ENCODE measurements at regions of chr12 and their contacts with region 1.

Region 1: GRCh38 chr12:26832822-26833742 is at the start of gene ITPR2:
- H3K4me3 ChIP-seq: peak within 1 kb of the TSS; percentile 78
- H3K27ac ChIP-seq: peak within 1 kb of the TSS; percentile 70
- H3K4me1 ChIP-seq: peaks cover 7% of the 10 kb centered on the region
- CTCF ChIP-seq: no peak

Region 2: DNA sequence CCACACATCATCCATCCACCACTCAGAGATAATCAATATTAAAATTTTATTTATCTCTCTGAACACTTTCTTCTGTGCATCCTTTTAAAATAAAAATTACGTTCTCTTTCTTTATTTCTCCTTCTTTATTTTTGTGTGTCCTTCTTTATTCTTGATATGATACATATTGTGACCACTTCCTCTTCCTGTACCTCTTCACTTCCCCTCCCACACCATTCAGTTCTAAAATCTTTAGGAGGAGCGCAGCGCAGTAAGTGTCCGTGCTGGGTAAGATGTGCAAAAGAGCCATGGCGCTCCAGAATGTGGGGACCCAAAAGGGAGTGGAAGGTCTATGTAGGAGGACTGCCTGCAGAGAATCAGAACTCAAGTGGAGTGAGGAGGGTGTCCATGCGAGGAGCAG is 256.8 kb before region 1 on chr12:
- CTCF ChIA-PET with region 1: no interaction called
- POLR2A ChIA-PET with region 1: no interaction called
- H3K4me3 ChIP-seq: no peak overlapping the region
- H3K27ac ChIP-seq: no peak overlapping the region
- H3K4me1 ChIP-seq: peaks cover 4% of the 10 kb centered on the region
- CTCF ChIP-seq: no peak

Region 3: DNA sequence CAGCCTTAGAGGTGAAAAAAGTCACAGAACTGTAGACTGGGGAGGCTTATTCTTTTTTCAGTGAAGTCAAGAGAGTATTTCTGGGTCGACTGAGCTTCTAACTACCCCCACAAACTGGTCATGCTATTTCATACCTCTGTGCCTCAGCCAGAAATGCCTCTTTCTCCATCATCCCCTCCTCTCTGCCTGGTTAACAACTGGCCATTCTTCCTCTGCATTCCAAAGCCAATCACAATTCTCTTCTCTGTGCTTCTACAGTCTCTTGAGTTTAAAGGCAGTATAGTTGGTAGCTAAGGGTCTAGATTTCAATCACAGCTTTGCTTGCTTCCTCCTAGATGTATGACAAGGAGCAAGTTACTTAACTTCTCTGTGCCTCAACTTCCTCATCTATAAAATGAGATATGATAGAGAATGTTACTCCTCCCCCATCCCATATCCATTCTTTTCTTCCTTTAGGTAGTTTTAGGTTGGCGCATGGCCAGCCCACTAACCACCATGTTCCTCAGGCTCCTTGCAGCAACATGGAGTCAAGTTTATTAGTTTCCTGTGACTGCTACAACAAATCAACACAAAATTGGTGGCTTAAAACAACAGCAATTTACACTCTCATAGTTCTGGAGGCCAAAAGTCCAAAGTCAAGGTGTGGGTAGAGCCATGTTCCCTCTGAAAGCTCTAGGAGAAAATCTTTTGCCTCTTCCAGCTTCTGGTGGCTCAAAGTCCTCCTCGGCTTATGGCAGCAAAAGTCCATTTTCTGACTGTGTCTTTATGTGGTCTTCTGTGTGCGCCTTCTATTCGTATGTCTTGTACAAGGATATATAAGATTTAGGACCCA is 62.6 kb before region 1 on chr12:
- CTCF ChIA-PET with region 1: no interaction called
- POLR2A ChIA-PET with region 1: no interaction called
- H3K4me3 ChIP-seq: no peak overlapping the region
- H3K27ac ChIP-seq: no peak overlapping the region
- H3K4me1 ChIP-seq: peaks cover 4% of the 10 kb centered on the region
- CTCF ChIP-seq: no peak

Region 4: GRCh38 chr12:26783131-26783526 is 50.0 kb before region 1 on chr12:
- CTCF ChIA-PET with region 1: no interaction called
- POLR2A ChIA-PET with region 1: no interaction called
- H3K4me3 ChIP-seq: no peak overlapping the region
- H3K27ac ChIP-seq: no peak overlapping the region
- H3K4me1 ChIP-seq: peaks cover 8% of the 10 kb centered on the region
- CTCF ChIP-seq: no peak

Region 5: DNA sequence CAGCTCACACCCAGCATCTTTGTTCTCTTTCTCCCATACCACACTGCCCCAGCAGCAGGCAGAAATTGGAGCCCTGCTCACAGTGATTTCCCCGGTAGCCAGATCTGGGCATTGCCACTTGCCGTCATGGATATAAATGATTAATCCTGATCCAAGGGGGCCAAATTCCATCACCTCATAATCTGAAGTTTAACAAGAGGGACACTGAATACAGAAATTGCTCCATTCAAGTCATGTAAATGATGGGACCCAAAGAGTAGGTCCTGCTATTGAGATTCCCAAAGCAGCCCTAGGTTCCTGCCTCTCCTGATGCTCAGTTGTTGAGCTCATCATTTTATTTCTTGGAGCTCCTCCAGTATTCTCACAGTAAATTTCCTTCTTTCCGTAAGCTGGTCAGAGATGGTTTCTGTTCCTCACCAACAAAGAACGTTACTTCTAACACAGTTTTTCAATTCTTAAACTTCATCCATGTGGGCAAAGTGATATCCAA is 11.8 kb before region 1 on chr12:
- CTCF ChIA-PET with region 1: interaction called, 5 read pairs
- POLR2A ChIA-PET with region 1: interaction called, 16 read pairs
- H3K4me3 ChIP-seq: no peak overlapping the region
- H3K27ac ChIP-seq: no peak overlapping the region
- H3K4me1 ChIP-seq: peaks cover 3% of the 10 kb centered on the region; the same call in 1 of the 2 replicates
- CTCF ChIP-seq: no peak

Region 6: DNA sequence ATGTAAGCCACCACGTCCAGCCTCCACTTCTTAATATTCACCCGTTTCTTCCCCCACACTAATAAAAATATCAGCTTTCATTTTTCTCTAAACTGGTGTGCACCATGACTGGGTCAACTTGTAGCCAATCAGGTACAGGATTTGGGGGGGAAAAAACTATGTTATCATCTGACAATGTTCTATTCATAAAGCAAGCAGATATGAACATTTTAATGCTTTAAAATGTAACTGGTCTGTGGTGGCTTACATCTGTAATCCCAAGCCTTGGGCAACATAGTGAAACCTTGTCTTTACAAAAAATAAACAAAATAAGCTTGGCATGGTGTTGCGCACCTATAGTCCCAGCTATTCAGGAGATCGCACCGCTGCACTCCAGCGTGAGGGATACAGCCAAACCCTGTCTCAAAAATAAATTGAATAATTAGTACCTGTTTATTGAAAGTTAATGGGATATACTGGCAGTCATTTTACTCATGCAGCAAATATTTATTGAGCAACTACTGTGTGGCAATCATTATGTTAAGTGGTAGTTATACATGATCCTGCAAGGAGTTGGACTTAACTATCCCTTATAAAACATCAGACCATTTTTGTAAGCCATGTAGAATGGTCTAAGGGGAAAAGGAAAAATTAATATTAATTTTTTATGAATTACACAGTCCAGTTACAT is 15.2 kb after region 1 on chr12:
- CTCF ChIA-PET with region 1: interaction called, 14 read pairs
- POLR2A ChIA-PET with region 1: interaction called, 7 read pairs
- H3K4me3 ChIP-seq: no peak overlapping the region
- H3K27ac ChIP-seq: no peak overlapping the region
- H3K4me1 ChIP-seq: no peaks in the 10 kb centered on the region
- CTCF ChIP-seq: no peak

Measured in HEK293 (cell line).